Activated T-helper 1 cell treated with anti-CD3 and anti-CD28 coated beads, Interleukin-12 subunit alpha, Interleukin-12 subunit beta, Interleukin-2, Interleukin-4 antibody, amounts not matched to agents 30 ng/mL and 10 ng/mL and 1 ng/mL, durations not matched to agents 14 hours and 24 hours and 36 hours (primary cell): ENCODE measurements at regions of chr4 and their contacts with region 1.

Region 1: GRCh38 chr4:154618708-154619315 is 6.4 kb upstream of the FGG start:
- DNase-seq: peak; percentile 47
- H3K4me3 Mint-ChIP-seq: no peak overlapping the region
- H3K27ac Mint-ChIP-seq: no peak overlapping the region
- H3K4me1 Mint-ChIP-seq: peaks cover 13% of the 10 kb centered on the region
- H3K27me3 Mint-ChIP-seq: peaks cover 12% of the 10 kb centered on the region

Region 2: GRCh38 chr4:154332681-154333421 is 286.0 kb before region 1 on chr4:
- intact Hi-C with region 1: loop called (anchors 2 kb)
- DNase-seq: peak; percentile 27
- H3K4me3 Mint-ChIP-seq: peak overlapping the region; percentile 78
- H3K27ac Mint-ChIP-seq: no peak overlapping the region
- H3K4me1 Mint-ChIP-seq: peaks cover 10% of the 10 kb centered on the region
- H3K27me3 Mint-ChIP-seq: peaks cover 47% of the 10 kb centered on the region

Region 3: GRCh38 chr4:154406018-154406795 is 212.6 kb before region 1 on chr4:
- intact Hi-C with region 1: no loop called
- DNase-seq: no peak
- H3K4me3 Mint-ChIP-seq: no peak overlapping the region
- H3K27ac Mint-ChIP-seq: no peak overlapping the region
- H3K4me1 Mint-ChIP-seq: peaks cover 7% of the 10 kb centered on the region
- H3K27me3 Mint-ChIP-seq: peaks cover 3% of the 10 kb centered on the region

Region 4: DNA sequence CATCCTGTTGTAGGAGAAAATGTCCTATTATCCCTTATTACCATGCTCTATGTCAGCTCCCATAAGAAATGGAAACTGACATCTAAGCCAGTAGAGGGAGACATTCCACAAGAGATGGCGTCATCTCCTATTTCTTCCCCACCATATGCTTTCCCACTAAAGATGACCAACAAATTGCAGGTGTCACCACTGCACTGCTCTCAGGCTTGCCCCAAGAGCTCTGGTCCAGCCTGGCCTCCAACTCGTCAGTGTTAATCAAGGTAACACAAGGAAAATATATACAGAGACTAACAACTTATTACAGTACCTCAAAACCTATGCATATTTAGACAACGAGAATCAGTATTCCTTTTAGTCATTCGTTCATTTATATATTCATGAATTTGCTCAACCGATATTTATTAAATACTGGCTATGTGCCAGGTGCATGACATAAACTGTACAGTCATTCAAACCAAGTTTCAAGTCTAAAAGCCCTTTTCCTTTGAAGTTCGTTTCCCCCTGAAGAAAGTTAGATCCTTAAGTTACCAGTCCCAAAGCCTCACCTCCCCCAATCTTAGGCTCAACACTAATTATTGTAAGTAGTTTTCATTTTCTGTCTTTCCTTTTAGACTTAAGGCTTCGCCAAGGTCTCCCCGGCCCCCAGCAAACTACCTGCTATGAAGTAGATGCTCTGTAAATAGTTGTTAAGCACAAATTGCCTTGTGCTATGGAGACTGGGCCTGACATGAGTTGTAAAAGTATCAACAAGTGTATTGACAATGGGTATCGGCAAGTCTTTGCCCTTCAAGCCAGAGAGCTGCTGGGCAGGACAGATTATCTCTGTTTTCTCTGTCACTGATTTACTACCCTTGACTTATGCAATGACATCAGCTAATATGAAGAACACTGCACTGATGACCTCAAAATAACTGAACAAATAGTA is 59.1 kb before region 1 on chr4:
- intact Hi-C with region 1: loop called (anchors 1 kb)
- DNase-seq: no peak
- H3K4me3 Mint-ChIP-seq: no peak overlapping the region
- H3K27ac Mint-ChIP-seq: no peak overlapping the region
- H3K4me1 Mint-ChIP-seq: no peaks in the 10 kb centered on the region
- H3K27me3 Mint-ChIP-seq: peaks cover 12% of the 10 kb centered on the region